Esophagus muscularis mucosa (tissue), 4 donors: ENCODE measurements at regions of chr1 and their contacts with region 1.

Region 1: DNA sequence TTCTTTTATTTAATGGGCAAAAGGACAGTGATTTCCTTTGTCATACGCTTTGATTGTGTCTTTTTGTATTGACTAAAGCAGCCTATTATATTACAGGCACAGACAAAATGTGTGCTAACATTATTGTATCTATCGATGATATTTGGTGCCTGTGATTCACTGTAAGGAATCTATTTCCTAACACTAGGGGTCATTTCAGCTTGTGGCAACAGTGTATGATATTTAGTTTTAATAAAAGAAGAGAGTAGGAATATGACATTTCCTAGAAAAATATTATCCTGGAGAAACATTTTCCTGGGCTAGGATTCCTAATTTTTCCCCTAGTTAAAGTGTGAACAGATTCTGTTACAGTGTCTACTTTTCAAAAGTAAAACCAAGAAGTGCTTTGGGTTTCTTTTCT is 42.8 kb downstream of the TYW3 start:
- DNase-seq: no peak
- H3K4me3 ChIP-seq: no peak overlapping the region
- H3K27ac ChIP-seq: no peak overlapping the region
- H3K4me1 ChIP-seq: no peaks in the 10 kb centered on the region
- H3K27me3 ChIP-seq: no peaks in the 10 kb centered on the region
- CTCF ChIP-seq: no peak
- EP300 ChIP-seq: no peak
- POLR2A ChIP-seq: no peak

Region 2: GRCh38 chr1:74010206-74010605 is 765.5 kb before region 1 on chr1:
- intact Hi-C with region 1: no loop called
- DNase-seq: no peak
- H3K4me3 ChIP-seq: no peak overlapping the region
- H3K27ac ChIP-seq: no peak overlapping the region
- H3K4me1 ChIP-seq: no peaks in the 10 kb centered on the region
- H3K27me3 ChIP-seq: no peaks in the 10 kb centered on the region
- CTCF ChIP-seq: no peak
- EP300 ChIP-seq: no peak
- POLR2A ChIP-seq: no peak

Region 3: GRCh38 chr1:75115654-75116053 is 339.9 kb after region 1 on chr1:
- intact Hi-C with region 1: no loop called
- DNase-seq: no peak
- H3K4me3 ChIP-seq: no peak overlapping the region
- H3K27ac ChIP-seq: no peak overlapping the region
- H3K4me1 ChIP-seq: no peaks in the 10 kb centered on the region
- H3K27me3 ChIP-seq: no peaks in the 10 kb centered on the region
- CTCF ChIP-seq: no peak
- EP300 ChIP-seq: no peak
- POLR2A ChIP-seq: no peak

Region 4: GRCh38 chr1:75203415-75204277 is 427.9 kb after region 1 on chr1:
- intact Hi-C with region 1: loop called (anchors 2 kb)
- DNase-seq: no peak
- H3K4me3 ChIP-seq: no peak overlapping the region
- H3K27ac ChIP-seq: no peak overlapping the region
- H3K4me1 ChIP-seq: no peaks in the 10 kb centered on the region
- H3K27me3 ChIP-seq: peaks cover 0 to 7% (median 0%) of the 10 kb centered on the region in 4 donors
- CTCF ChIP-seq: peak; percentile 42 to 60 (median 56)
- EP300 ChIP-seq: no peak
- POLR2A ChIP-seq: no peak